ENCODE measurements at regions of chr2 and their contacts with region 1.

Region 1: GRCh38 chr2:54665436-54665856 is 58.0 kb upstream of the EML6 start:
- DNase-seq: peak; percentile 75
- ATAC-seq: peak; percentile 92
- H3K4me3 Mint-ChIP-seq: no peak overlapping the region
- H3K27ac Mint-ChIP-seq: peak overlapping the region; percentile 80
- H3K4me1 Mint-ChIP-seq: peaks cover 3% of the 10 kb centered on the region
- H3K27me3 Mint-ChIP-seq: no peaks in the 10 kb centered on the region

Region 2: DNA sequence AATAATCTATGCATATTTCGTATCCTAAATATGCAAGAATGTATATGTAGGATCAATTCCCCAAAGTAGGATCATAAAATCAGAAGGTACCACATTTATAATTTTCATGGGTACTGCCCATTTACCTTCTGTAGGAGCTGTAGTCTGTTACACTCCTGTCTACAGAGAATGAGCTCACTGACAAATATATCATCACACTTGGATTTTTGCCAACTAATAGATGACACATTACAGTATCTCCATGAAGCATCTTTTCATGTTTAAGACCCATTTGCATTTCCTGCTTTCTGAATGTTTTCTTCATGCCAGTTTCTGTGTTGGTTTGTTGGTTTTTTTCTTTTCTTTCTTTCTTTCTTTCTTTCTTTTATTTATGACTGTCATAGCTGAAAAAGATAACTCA is 12.9 kb before region 1 on chr2:
- CTCF ChIA-PET with region 1: interaction called, 28 read pairs
- POLR2A ChIA-PET with region 1: no interaction called
- intact Hi-C with region 1: no loop called
- DNase-seq: no peak
- ATAC-seq: peak; percentile 81
- H3K4me3 Mint-ChIP-seq: no peak overlapping the region
- H3K27ac Mint-ChIP-seq: peak overlapping the region; percentile 1
- H3K4me1 Mint-ChIP-seq: peaks cover 8% of the 10 kb centered on the region
- H3K27me3 Mint-ChIP-seq: no peaks in the 10 kb centered on the region

Region 3: GRCh38 chr2:54680397-54681041 is 15.1 kb after region 1 on chr2:
- CTCF ChIA-PET with region 1: interaction called, 88 read pairs
- POLR2A ChIA-PET with region 1: no interaction called
- intact Hi-C with region 1: no loop called
- DNase-seq: peak; percentile 69
- ATAC-seq: peak; percentile 95
- H3K4me3 Mint-ChIP-seq: no peak overlapping the region
- H3K27ac Mint-ChIP-seq: peak overlapping the region; percentile 72
- H3K4me1 Mint-ChIP-seq: peaks cover 22% of the 10 kb centered on the region
- H3K27me3 Mint-ChIP-seq: peaks cover 61% of the 10 kb centered on the region

Region 4: DNA sequence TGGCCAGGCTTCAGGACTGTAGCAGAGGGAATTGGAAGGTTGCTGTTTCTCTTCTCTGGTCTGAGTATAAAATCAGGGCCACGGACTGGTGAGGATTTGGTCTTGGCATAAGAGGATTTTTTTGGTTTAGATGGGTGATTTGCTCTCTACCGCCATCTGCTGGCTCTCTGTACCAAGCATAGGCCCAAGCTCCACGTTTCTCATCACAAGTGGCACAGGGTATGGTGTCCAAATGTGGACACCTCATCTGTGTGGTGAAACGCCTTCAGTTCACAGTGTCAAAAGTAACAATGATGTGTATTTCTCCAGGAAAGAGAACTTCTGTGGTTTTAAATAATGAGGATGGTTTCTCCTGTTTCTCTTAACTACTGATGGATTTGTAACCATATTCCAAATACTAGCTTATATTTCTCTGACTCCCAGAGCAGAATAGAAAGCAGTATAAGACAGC is 173.2 kb after region 1 on chr2:
- CTCF ChIA-PET with region 1: interaction called, 42 read pairs
- POLR2A ChIA-PET with region 1: no interaction called
- intact Hi-C with region 1: loop called (anchors 1 to 2 kb)
- DNase-seq: peak; percentile 79
- ATAC-seq: peak; percentile 97
- H3K4me3 Mint-ChIP-seq: no peak overlapping the region
- H3K27ac Mint-ChIP-seq: no peak overlapping the region
- H3K4me1 Mint-ChIP-seq: no peaks in the 10 kb centered on the region
- H3K27me3 Mint-ChIP-seq: no peaks in the 10 kb centered on the region

Region 5: DNA sequence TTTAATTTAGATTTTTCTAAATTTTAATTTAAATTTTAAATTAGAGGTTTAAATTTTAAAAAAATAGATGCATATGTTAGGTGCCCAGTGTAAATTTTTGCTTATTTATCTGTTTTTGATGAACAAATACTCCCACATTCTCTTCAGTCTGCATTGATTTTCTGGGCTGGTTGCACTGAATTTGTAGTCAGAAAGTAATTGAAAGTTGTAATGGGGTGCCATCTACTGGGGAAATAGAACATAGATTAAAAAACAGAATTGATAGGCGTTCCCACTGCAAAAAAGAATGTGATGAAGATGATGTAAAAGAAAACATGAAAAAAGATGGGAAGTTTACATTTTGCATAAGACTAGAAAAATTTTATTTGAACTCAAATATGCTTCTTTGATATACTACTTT is 1466.7 kb after region 1 on chr2:
- CTCF ChIA-PET with region 1: no interaction called
- POLR2A ChIA-PET with region 1: no interaction called
- intact Hi-C with region 1: no loop called
- DNase-seq: no peak
- ATAC-seq: no peak
- H3K4me3 Mint-ChIP-seq: no peak overlapping the region
- H3K27ac Mint-ChIP-seq: no peak overlapping the region
- H3K4me1 Mint-ChIP-seq: no peaks in the 10 kb centered on the region
- H3K27me3 Mint-ChIP-seq: peaks cover 4% of the 10 kb centered on the region

Region 6: GRCh38 chr2:56202381-56203121 is 1537.1 kb after region 1 on chr2:
- CTCF ChIA-PET with region 1: no interaction called
- POLR2A ChIA-PET with region 1: no interaction called
- intact Hi-C with region 1: no loop called
- DNase-seq: no peak
- ATAC-seq: no peak
- H3K4me3 Mint-ChIP-seq: no peak overlapping the region
- H3K27ac Mint-ChIP-seq: no peak overlapping the region
- H3K4me1 Mint-ChIP-seq: no peaks in the 10 kb centered on the region
- H3K27me3 Mint-ChIP-seq: peaks cover 2% of the 10 kb centered on the region

Measured in activated CD4-positive, alpha-beta T cell treated with anti-CD3 and anti-CD28 coated beads for 36 hours (primary cell).